ENCODE measurements at regions of chr9 and their contacts with region 1.

Region 1: DNA sequence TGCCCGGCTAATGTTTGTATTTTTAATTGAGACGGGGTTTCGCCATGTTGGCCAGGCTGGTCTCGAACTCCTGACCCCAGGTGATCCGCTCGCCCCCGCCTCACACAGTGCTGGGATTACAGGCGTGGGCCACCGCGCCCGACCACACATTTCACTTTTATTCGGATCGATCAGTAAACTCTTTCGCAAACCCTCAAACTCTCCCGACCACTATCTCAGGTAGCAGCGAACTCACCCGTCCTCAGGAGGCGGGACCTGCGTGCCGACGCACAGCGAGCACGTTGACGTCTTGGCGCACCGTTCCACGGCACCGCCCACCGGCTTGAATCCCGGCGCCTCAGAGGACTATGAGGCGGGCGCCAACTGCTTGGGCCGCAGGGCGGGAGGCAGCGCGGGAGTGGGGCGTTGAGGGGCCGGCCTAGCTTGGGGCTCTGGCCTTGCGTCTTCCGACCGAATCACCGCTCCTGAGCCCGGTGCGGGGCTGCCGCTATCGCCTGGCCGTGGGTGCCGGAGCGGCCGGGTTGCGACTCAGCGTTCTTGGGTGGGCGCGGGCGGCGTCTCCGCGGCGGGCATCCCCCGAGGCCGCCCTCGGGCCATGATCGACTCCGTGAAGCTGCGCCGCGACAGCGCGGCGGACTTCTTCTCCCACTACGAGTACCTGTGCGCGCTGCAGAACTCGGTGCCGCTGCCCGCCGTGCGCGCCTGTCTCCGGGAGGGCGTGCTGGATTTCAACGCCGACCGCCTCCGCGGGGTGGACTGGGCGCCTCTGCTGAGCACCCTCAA is at the start of gene CEP78:
- DNase-seq: peak; percentile 94
- ATAC-seq: peak; percentile 98
- H3K4me3 Mint-ChIP-seq: no peak within 1 kb of the TSS
- H3K27ac Mint-ChIP-seq: peak within 1 kb of the TSS; percentile 93
- H3K4me1 Mint-ChIP-seq: peaks cover 30% of the 10 kb centered on the region
- H3K27me3 Mint-ChIP-seq: no peaks in the 10 kb centered on the region
- total RNA-seq, gene CEP78: 35.0 to 39.2 TPM

Region 2: DNA sequence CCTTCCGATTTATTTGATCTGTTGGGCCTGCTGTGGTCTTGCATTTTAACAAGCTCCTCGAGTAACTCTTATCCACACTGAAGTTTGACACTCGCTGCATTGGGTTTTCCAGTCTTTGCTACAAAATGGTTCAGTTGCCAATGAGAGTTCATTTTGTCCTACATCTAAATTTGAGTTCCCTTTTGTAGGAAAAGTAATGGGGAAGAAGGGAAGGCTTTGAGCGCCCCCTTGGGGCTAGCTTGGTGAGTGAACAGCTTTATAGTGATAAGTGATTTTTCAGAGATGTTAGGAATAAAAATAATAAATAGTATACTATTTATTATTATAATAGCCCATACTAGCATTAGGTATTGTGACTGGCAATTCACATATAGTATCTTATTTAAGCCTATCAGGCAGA is 114.5 kb before region 1 on chr9:
- CTCF ChIA-PET with region 1: no interaction called
- POLR2A ChIA-PET with region 1: no interaction called
- intact Hi-C with region 1: loop called in 1 of 2 experiments (anchors 5 kb)
- DNase-seq: peak; percentile 79
- ATAC-seq: no peak
- H3K4me3 Mint-ChIP-seq: no peak overlapping the region
- H3K27ac Mint-ChIP-seq: no peak overlapping the region
- H3K4me1 Mint-ChIP-seq: peaks cover 37% of the 10 kb centered on the region
- H3K27me3 Mint-ChIP-seq: no peaks in the 10 kb centered on the region

Region 3: DNA sequence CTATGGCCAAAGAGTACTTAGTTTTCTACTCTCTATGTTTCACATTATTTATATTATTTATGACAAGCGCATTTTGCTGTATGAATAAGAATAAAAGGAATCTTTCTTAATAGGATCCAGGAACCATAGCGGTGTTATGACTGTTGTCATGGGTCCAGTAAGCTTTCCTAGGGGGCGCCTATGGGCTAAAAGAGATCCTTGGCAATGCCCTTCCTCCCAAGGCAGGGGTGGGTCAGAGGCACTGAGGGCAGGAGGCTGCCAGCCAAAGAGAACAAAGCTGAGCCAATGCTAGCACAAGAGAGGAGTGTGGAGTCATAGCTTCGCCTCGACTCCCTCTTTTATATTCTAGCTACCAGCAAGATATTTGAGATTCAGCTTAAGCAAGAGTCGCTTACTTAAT is 105.9 kb before region 1 on chr9:
- CTCF ChIA-PET with region 1: interaction called, 3 read pairs
- POLR2A ChIA-PET with region 1: no interaction called
- intact Hi-C with region 1: loop called in 1 of 2 experiments (anchors 5 kb)
- DNase-seq: no peak
- ATAC-seq: no peak
- H3K4me3 Mint-ChIP-seq: no peak overlapping the region
- H3K27ac Mint-ChIP-seq: no peak overlapping the region
- H3K4me1 Mint-ChIP-seq: peaks cover 22% of the 10 kb centered on the region
- H3K27me3 Mint-ChIP-seq: peaks cover 2% of the 10 kb centered on the region

Region 4: GRCh38 chr9:78171651-78172050 is 64.3 kb before region 1 on chr9:
- CTCF ChIA-PET with region 1: no interaction called
- POLR2A ChIA-PET with region 1: no interaction called
- intact Hi-C with region 1: no loop called
- DNase-seq: no peak
- ATAC-seq: no peak
- H3K4me3 Mint-ChIP-seq: no peak overlapping the region
- H3K27ac Mint-ChIP-seq: no peak overlapping the region
- H3K4me1 Mint-ChIP-seq: no peaks in the 10 kb centered on the region
- H3K27me3 Mint-ChIP-seq: no peaks in the 10 kb centered on the region

Region 5: DNA sequence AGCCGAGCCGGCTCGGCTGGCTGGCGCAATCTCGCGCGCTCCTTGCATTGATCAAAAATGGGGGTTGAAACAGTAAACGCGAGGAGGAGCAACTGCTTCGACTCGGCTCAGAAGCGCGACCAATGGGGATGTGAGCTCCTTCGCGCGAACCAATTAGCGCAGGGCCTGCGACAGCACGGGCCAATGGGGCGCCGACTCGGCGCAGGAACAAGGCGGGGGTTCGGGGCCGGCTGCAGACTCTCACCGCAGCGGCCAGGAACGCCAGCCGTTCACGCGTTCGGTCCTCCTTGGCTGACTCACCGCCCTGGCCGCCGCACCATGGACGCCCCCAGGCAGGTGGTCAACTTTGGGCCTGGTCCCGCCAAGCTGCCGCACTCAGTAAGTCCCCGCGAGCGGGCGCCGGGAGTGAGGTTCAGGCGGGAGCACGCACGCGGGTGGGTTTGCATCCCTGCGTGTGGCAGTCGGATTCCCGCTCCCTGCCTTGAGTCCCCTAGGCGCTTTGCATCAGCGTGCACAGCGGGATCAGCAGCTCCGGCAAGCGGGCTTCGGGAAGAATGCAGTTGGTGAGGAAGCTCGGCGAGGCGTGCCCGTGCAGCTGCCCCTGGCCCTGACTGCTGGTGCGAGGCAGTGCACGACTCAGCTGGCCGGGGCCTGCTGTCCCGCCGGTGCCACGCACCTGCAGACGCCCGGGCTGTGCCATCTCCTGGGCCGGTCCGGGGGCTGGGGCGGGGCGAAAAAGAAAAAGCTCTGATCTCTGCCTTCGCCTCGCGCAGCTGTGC is 61.1 kb after region 1 on chr9 and contains the start of gene PSAT1:
- CTCF ChIA-PET with region 1: interaction called, 4 read pairs
- POLR2A ChIA-PET with region 1: interaction called, 5 read pairs
- intact Hi-C with region 1: loop called (anchors 1 kb)
- DNase-seq: peak; percentile 96
- ATAC-seq: peak; percentile 98
- H3K4me3 Mint-ChIP-seq: peak within 1 kb of the TSS; percentile 91
- H3K27ac Mint-ChIP-seq: peak within 1 kb of the TSS; percentile 97
- H3K4me1 Mint-ChIP-seq: peaks cover 29% of the 10 kb centered on the region
- H3K27me3 Mint-ChIP-seq: no peaks in the 10 kb centered on the region
- total RNA-seq, gene PSAT1: 145 to 190 TPM